ENCODE measurements at regions of chr17 and their contacts with region 1.

Region 1: DNA sequence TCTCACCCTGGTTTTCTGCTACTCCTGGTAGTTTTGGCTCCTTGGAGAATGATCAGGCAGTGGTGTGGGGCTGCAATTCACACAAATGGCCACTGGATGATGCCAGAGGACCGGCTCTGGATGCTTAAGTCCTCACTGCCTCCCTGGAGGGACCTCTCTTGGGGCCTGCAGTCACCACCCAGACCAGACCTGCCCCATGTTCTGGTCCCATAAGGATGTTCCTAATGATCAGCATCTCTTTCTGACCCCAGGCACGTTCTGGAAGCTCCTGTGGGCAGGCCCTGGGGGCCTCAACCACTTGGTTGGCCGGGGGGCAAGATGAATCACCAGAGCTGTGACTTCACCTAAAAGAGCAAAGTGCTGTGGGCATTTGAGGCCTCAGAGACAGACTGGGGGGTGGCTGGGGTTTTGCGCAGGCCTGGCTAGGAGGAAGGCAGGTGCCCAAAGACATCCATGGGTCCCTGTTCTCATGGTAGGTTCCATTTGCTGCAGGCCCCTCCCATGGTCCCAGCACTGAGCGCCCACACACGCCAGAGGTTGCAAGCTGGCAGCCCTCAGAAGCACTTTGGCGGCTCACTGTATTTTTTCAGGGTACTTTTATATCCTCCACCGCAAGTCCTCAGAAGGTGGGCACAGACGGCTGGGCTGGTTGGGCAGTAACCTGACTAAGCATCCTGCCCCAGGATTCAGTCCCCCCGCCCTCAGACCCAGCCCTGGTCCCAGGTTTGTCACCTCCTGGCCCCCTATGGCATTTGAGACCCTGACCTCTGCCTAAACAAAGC is 53.2 kb downstream of the NT5M start:
- DNase-seq: peak; percentile 42
- ATAC-seq: peak; percentile 88
- H3K4me3 Mint-ChIP-seq: no peak overlapping the region
- H3K27ac Mint-ChIP-seq: no peak overlapping the region
- H3K4me1 Mint-ChIP-seq: no peaks in the 10 kb centered on the region
- H3K27me3 Mint-ChIP-seq: peaks cover 3% of the 10 kb centered on the region
- CTCF ChIP-seq: peak; percentile 81

Region 2: GRCh38 chr17:17440010-17440843 is 83.9 kb after region 1 on chr17:
- CTCF ChIA-PET with region 1: interaction called, 11 read pairs
- POLR2A ChIA-PET with region 1: no interaction called
- intact Hi-C with region 1: loop called (anchors 1 kb)
- DNase-seq: peak; percentile 57
- ATAC-seq: peak; percentile 86
- H3K4me3 Mint-ChIP-seq: no peak overlapping the region
- H3K27ac Mint-ChIP-seq: no peak overlapping the region
- H3K4me1 Mint-ChIP-seq: no peaks in the 10 kb centered on the region
- H3K27me3 Mint-ChIP-seq: peaks cover 4% of the 10 kb centered on the region
- CTCF ChIP-seq: no peak

Region 3: GRCh38 chr17:17467720-17468119 is 111.4 kb after region 1 on chr17:
- CTCF ChIA-PET with region 1: no interaction called
- POLR2A ChIA-PET with region 1: no interaction called
- intact Hi-C with region 1: no loop called
- DNase-seq: no peak
- ATAC-seq: no peak
- H3K4me3 Mint-ChIP-seq: no peak overlapping the region
- H3K27ac Mint-ChIP-seq: no peak overlapping the region
- H3K4me1 Mint-ChIP-seq: no peaks in the 10 kb centered on the region
- H3K27me3 Mint-ChIP-seq: peaks cover 24% of the 10 kb centered on the region
- CTCF ChIP-seq: no peak

Region 4: DNA sequence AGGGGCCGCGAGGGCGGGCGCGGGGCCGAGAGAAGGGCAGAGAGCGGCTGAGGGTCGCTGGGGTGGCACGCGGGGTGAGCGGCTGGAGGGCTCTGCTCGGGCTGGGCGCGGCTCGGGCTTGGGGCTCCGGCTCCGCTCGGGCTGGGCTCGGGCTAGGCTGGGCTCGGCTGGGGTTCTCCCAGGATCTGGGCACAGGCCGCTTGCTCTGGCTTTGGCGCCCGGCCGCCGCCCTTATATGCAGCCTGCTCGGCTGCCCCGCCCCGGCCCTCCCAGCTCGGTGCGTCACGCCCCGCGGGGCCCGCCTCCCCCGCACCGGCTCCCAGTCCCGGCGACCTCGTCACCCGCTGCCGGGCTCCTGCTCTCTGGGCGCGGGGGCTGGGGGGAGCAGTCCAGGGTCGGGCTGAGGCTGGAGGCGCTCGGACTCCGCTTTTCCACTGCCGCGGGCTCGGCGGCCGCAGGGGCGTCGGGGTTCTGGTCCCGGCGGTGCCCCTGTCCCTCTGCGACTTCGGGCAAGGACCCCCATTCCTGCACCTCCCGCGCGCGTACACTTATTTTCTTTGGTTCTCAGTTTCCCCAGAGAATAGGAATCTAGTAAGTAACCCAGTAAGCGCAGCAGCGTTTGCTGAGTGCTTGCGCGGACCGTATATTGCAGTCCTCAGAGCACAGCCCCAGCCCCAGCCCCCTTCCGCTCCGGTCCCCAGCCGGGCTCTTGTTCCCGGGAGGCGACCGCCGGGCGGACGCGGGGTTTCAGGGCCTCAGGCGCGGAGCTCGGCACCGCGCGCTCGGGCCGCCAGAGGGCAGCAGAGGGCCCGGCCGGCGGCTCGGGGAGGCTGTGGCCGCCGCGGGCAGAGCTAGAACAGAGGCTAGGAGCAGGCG is 140.1 kb after region 1 on chr17 and contains the start of gene RASD1:
- CTCF ChIA-PET with region 1: interaction called, 4 read pairs
- POLR2A ChIA-PET with region 1: no interaction called
- intact Hi-C with region 1: loop called (anchors 1 kb)
- DNase-seq: peak; percentile 81
- ATAC-seq: peak; percentile 88
- H3K4me3 Mint-ChIP-seq: peak within 1 kb of the TSS; percentile 80
- H3K27ac Mint-ChIP-seq: no peak within 1 kb of the TSS
- H3K4me1 Mint-ChIP-seq: peaks cover 17% of the 10 kb centered on the region
- H3K27me3 Mint-ChIP-seq: peaks cover 8% of the 10 kb centered on the region
- CTCF ChIP-seq: peak; percentile 67
- total RNA-seq, gene RASD1: 0.86 and 1.0 TPM in 2 replicates

Region 5: DNA sequence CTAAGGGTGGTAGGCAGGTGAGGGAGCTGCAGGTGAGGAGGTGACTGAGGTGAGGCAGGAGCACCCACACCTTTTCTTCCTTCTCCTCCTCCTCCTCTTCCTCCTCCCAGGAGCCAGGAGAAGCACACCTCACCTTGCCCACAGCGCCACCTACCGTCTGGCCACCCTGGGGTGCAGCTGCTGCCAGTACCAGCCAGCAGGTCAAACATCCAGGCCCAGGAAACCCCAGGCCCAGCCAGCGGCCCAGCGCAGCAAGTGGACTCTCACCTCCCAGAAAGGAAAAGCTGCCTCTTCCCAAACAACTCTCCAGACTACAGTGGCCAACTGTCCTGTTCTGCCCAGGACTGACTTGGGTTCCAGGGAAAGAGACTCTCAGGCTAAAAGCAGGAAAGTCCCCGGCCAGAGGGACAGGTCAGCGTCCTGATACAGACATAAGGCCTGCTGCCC is 212.4 kb after region 1 on chr17:
- CTCF ChIA-PET with region 1: interaction called, 3 read pairs
- POLR2A ChIA-PET with region 1: no interaction called
- intact Hi-C with region 1: loop called (anchors 1 kb)
- DNase-seq: peak; percentile 25
- ATAC-seq: peak; percentile 37
- H3K4me3 Mint-ChIP-seq: no peak overlapping the region
- H3K27ac Mint-ChIP-seq: no peak overlapping the region
- H3K4me1 Mint-ChIP-seq: no peaks in the 10 kb centered on the region
- H3K27me3 Mint-ChIP-seq: no peaks in the 10 kb centered on the region
- CTCF ChIP-seq: no peak

Region 6: GRCh38 chr17:17613708-17614114 is 257.4 kb after region 1 on chr17:
- CTCF ChIA-PET with region 1: interaction called, 6 read pairs
- POLR2A ChIA-PET with region 1: no interaction called
- intact Hi-C with region 1: loop called (anchors 1 kb)
- DNase-seq: no peak
- ATAC-seq: peak; percentile 91
- H3K4me3 Mint-ChIP-seq: no peak overlapping the region
- H3K27ac Mint-ChIP-seq: no peak overlapping the region
- H3K4me1 Mint-ChIP-seq: peaks cover 2% of the 10 kb centered on the region
- H3K27me3 Mint-ChIP-seq: peaks cover 3% of the 10 kb centered on the region
- CTCF ChIP-seq: no peak

Region 7: DNA sequence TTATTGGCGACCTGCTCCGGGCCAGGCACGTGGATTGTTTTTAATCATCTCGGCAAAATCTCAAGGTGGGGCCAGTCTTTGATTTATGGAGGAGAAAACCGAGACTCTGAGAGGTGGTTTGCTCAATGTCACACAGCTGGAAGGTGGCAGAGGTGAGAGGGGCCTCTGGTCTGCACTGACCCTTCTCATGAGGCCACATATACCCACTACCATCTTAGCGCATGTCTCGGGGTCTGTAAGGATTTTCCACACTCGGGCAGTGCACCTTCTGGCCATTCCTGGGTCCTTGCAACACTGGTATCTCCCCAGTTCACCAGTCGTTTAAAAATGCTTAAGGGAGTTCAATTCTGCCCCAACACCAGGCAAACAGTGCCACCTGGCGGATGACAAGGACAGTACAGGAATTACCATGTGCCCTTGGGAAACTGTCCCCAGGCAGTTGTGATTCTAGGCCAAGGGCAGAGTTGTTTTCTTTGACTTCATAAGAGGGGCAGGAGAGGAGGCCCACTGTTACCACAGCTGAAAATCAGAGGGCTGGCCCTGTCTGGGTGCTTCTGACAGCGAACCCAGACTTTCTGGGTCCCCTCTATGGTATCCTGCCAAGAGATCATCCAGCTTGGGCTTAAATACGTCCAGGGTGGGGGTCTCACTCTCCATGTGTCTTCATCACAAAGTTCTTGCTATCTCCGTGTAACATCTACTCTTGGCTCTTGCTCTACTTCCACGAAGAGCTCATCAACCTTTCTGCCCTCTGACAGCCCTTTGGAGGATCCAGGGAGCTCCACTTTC is 285.5 kb after region 1 on chr17:
- CTCF ChIA-PET with region 1: interaction called, 52 read pairs
- POLR2A ChIA-PET with region 1: no interaction called
- intact Hi-C with region 1: loop called (anchors 1 kb)
- DNase-seq: peak; percentile 67
- ATAC-seq: peak; percentile 94
- H3K4me3 Mint-ChIP-seq: no peak overlapping the region
- H3K27ac Mint-ChIP-seq: no peak overlapping the region
- H3K4me1 Mint-ChIP-seq: no peaks in the 10 kb centered on the region
- H3K27me3 Mint-ChIP-seq: peaks cover 4% of the 10 kb centered on the region
- CTCF ChIP-seq: peak; percentile 70

Region 8: DNA sequence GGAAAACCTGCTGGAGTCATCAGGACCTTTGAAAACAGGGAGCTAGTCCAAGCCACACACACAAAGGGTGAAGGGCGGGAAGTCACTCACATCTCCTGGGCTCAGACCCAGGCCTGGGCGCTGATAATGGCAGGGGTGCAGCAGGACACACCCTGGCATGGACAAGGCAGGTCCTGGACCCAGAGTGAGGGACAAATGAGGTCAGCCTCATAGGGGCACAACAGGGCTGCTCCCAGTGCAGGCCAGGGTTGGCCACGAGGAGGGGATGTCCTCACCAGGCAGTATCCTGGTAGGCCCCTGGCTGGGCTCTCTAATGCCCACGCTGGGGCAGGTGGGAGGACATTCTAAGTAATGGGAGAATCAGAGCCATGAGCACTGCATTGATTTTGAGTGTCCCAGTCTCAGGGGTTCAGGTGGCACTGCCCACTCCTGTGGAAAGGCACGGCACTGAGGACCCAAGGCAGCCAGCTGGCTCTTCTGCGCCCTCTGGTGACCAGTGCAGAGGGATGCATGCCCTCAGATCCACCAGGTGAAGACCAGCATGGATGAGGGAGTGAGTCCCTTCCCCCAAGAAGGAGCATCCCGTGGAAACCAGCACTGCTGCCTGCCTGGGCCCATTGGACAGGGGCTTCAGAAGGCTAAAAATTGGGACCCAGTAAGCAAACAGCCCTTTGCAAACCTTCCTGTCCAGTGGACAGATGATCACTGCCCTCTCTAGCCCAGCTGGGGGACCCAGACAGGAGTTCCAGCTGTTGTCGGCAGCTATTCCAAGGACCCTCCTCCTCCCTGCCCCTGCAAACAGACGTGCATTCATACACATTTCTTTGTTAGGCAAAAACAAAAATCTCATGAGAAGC is 503.8 kb after region 1 on chr17:
- CTCF ChIA-PET with region 1: no interaction called
- POLR2A ChIA-PET with region 1: no interaction called
- intact Hi-C with region 1: loop called (anchors 5 kb)
- DNase-seq: peak; percentile 65
- ATAC-seq: peak; percentile 99
- H3K4me3 Mint-ChIP-seq: no peak overlapping the region
- H3K27ac Mint-ChIP-seq: no peak overlapping the region
- H3K4me1 Mint-ChIP-seq: no peaks in the 10 kb centered on the region
- H3K27me3 Mint-ChIP-seq: no peaks in the 10 kb centered on the region
- CTCF ChIP-seq: peak; percentile 84